Activated CD4-positive, alpha-beta T cell treated with anti-CD3 and anti-CD28 coated beads, Interleukin-2, amount 10 ng/mL, durations not matched to agents 24 days and 14 days (primary cell): ENCODE measurements at regions of chr21 and their contacts with region 1.

Region 1: DNA sequence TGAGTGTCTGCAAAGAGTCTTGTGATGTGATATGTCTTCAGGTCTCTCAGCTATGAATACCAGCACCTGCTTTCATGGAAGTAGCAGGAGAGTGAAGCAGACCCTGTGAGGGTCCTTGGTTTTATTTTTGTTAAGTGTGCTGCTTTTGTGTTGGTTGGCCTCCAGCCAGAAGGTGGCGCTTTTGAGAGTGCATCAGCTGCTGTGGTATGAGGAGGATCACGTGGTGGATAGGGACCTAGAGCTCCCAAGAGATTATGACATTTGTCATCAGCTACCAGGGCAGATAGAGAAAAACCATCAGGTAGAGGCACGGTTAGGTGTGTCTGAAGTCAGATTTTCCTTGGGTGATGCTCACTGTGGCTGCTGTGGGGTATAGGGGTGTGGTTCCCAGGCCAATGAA is 1232.1 kb downstream of the MRPL39 start:
- DNase-seq: peak; percentile 65
- H3K4me3 Mint-ChIP-seq: no peak overlapping the region
- H3K27ac Mint-ChIP-seq: no peak overlapping the region
- H3K4me1 Mint-ChIP-seq: no peaks in the 10 kb centered on the region
- H3K27me3 Mint-ChIP-seq: no peaks in the 10 kb centered on the region

Region 2: DNA sequence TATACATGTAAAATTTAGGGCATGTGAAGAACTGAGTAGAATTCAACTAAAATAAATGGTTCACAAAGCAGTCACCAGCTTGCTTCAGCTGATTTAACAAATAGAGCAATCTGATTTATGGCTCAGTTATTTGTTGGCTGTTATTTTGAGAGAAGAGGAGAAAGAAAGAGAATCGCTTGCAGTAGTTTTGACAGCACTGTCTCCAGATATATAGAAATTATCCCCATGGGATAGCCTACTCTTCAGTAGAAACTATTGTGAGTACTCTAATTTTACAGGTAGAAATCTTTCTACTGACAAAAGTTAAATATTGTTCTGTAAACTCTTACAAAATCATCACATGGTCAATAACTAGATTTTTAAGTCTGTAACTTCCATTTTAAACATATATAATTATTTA is 133.9 kb after region 1 on chr21:
- intact Hi-C with region 1: loop called (anchors 2 kb)
- DNase-seq: no peak
- H3K4me3 Mint-ChIP-seq: no peak overlapping the region
- H3K27ac Mint-ChIP-seq: no peak overlapping the region
- H3K4me1 Mint-ChIP-seq: no peaks in the 10 kb centered on the region
- H3K27me3 Mint-ChIP-seq: no peaks in the 10 kb centered on the region

Region 3: GRCh38 chr21:24514081-24514733 is 139.0 kb after region 1 on chr21:
- intact Hi-C with region 1: loop called (anchors 2 kb)
- DNase-seq: no peak
- H3K4me3 Mint-ChIP-seq: no peak overlapping the region
- H3K27ac Mint-ChIP-seq: no peak overlapping the region
- H3K4me1 Mint-ChIP-seq: no peaks in the 10 kb centered on the region
- H3K27me3 Mint-ChIP-seq: no peaks in the 10 kb centered on the region